ENCODE measurements at regions of chr16 and their contacts with region 1.

Region 1: GRCh38 chr16:74650966-74651567 is 15.6 kb downstream of the RFWD3 start:
- DNase-seq: no peak
- H3K4me3 ChIP-seq: no peak overlapping the region
- H3K27ac ChIP-seq: no peak overlapping the region
- H3K27me3 ChIP-seq: no peaks in the 10 kb centered on the region
- CTCF ChIP-seq: peak; percentile 55

Region 2: GRCh38 chr16:74456290-74456625 is 194.8 kb before region 1 on chr16:
- CTCF ChIA-PET with region 1: no interaction called
- POLR2A ChIA-PET with region 1: no interaction called
- DNase-seq: no peak
- H3K4me3 ChIP-seq: no peak overlapping the region
- H3K27ac ChIP-seq: no peak overlapping the region
- H3K27me3 ChIP-seq: no peaks in the 10 kb centered on the region
- CTCF ChIP-seq: no peak

Region 3: GRCh38 chr16:74635303-74635702 is 15.8 kb before region 1 on chr16:
- CTCF ChIA-PET with region 1: interaction called, 13 read pairs
- POLR2A ChIA-PET with region 1: interaction called, 3 read pairs
- DNase-seq: no peak
- H3K4me3 ChIP-seq: no peak overlapping the region
- H3K27ac ChIP-seq: no peak overlapping the region
- H3K27me3 ChIP-seq: no peaks in the 10 kb centered on the region
- CTCF ChIP-seq: no peak

Region 4: GRCh38 chr16:74666425-74667254 is 15.6 kb after region 1 on chr16 and contains the start of gene RFWD3:
- CTCF ChIA-PET with region 1: interaction called, 12 read pairs
- POLR2A ChIA-PET with region 1: interaction called, 6 read pairs
- DNase-seq: peak; percentile 96
- H3K4me3 ChIP-seq: peak within 1 kb of the TSS; percentile 87
- H3K27ac ChIP-seq: peak within 1 kb of the TSS; percentile 73
- H3K27me3 ChIP-seq: no peaks in the 10 kb centered on the region
- CTCF ChIP-seq: no peak
- polyA plus RNA-seq, gene RFWD3: 10.7 and 13.4 TPM in 2 replicates

Region 5: DNA sequence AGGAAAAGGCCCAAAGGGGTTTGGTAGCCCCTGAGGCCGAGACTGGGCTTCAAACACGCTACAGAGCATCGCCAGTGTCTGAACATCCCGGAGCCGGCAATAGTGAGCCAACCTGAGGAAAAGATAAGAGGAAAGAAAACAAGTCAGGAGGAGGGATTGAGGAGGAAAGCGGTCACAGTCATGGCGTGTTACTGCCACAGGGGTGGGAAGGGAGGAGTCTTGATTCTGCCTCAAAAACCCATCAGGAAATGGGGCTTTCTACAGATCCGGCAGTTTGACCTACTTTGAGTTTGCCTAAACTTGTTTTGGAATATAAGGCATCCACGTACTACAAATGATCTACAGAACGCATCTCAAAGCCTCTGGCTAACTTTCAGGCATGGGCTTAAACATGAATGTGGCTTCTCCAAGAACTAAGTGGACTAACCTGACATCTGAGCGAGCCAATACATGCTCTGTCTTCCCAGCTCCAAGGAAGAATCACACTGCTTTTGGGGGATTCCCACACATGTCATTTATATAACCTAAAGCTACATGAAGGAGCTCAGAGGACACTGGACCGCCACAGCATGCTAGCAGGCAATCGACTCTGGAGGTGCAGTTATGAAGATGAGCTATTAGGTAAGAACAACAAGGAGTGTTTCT is 237.3 kb after region 1 on chr16:
- CTCF ChIA-PET with region 1: no interaction called
- POLR2A ChIA-PET with region 1: interaction called, 10 read pairs
- DNase-seq: no peak
- H3K4me3 ChIP-seq: no peak overlapping the region
- H3K27ac ChIP-seq: no peak overlapping the region
- H3K27me3 ChIP-seq: no peaks in the 10 kb centered on the region
- CTCF ChIP-seq: no peak

Measured in AG04450 (cell line).